Activated CD4-positive, alpha-beta T cell treated with anti-CD3 and anti-CD28 coated beads for 36 hours (primary cell): ENCODE measurements at regions of chr18 and their contacts with region 1.

Region 1: DNA sequence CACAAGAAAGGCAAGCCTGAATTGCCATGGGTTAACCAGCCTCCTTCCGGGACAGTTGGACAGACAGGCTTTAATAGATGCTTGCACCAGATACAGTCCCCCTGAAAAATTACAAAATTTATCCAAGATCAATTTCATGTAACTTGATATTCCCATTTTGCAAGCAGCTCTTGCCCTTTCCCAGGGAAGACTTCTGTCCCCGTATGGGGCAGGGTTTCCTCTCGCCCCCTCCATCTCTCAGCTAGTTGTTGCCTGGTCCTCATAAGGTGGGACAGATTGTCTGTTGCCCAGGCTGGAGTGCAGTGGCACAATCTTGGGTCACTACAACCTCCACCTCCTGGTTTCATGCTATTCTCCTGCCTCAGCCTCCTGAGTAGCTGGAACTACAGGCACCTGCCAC is 61.2 kb downstream of the TTC39C start:
- DNase-seq: no peak
- ATAC-seq: no peak
- H3K4me3 Mint-ChIP-seq: no peak overlapping the region
- H3K27ac Mint-ChIP-seq: peak overlapping the region; percentile 81
- H3K4me1 Mint-ChIP-seq: peaks cover 44% of the 10 kb centered on the region
- H3K27me3 Mint-ChIP-seq: no peaks in the 10 kb centered on the region

Region 2: DNA sequence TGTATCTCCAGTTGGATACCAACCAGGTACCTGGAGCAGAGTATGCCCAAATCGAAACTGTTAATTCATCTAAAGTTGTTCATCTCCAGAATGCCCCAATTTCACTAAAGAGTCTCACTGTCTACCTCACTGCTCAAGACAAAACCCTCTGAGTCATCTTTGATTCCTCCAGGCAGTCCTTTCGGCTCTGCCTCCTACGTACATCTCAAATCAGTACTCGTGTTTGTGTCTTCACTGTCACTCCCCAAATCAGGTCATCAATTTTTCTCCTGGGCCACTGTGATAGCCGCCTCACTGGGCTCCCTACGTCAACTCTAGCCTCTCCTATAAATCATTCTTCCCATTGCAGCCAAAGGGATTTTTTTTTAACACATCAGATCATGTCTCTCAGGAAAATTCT is 103.3 kb before region 1 on chr18:
- CTCF ChIA-PET with region 1: interaction called, 4 read pairs
- POLR2A ChIA-PET with region 1: no interaction called
- intact Hi-C with region 1: loop called in 1 of 2 experiments (anchors 1 kb)
- DNase-seq: peak; percentile 55
- ATAC-seq: peak; percentile 92
- H3K4me3 Mint-ChIP-seq: no peak overlapping the region
- H3K27ac Mint-ChIP-seq: no peak overlapping the region
- H3K4me1 Mint-ChIP-seq: peaks cover 52% of the 10 kb centered on the region
- H3K27me3 Mint-ChIP-seq: no peaks in the 10 kb centered on the region

Region 3: DNA sequence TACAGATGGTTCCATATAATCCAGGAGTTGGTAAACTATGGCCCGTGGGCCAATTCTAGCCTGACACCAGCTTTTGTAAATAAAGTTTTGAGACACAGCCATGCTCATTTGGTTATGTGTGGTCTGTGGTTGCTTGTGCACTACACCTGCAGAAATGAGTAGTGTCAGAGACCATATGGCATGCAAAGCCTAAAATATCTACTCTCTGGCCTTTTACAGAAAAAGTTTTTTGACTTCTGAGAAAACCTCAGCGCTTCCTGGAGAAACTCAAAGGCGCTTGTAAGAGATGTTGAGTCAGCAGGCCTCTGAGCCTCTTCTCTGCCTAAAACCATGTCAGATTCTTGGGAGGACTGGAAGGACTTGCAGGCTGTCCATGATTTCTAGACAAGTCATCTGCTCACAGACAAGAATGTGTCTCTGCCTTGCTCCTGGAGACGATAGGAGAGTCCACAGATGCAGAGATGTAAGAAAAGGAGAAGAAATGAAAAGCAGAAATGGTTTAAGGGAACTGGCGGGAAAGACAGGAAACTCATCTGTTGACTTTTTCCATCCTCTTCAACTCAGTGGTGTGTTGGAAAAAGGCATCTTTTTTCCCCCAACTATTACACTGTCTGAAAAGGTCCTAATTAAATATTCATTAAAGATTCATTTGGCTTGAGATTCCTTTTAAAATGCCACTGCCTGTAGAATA is 55.9 kb before region 1 on chr18:
- CTCF ChIA-PET with region 1: interaction called, 4 read pairs
- POLR2A ChIA-PET with region 1: no interaction called
- intact Hi-C with region 1: loop called (anchors 1 to 2 kb)
- DNase-seq: peak; percentile 76
- ATAC-seq: peak; percentile 70
- H3K4me3 Mint-ChIP-seq: peak overlapping the region; percentile 55
- H3K27ac Mint-ChIP-seq: peak overlapping the region; percentile 96
- H3K4me1 Mint-ChIP-seq: peaks cover 85% of the 10 kb centered on the region
- H3K27me3 Mint-ChIP-seq: no peaks in the 10 kb centered on the region

Region 4: GRCh38 chr18:24063121-24063731 is 12.5 kb before region 1 on chr18:
- CTCF ChIA-PET with region 1: interaction called, 5 read pairs
- POLR2A ChIA-PET with region 1: no interaction called
- intact Hi-C with region 1: loop called in 1 of 2 experiments (anchors 2 kb)
- DNase-seq: peak; percentile 21
- ATAC-seq: peak; percentile 96
- H3K4me3 Mint-ChIP-seq: no peak overlapping the region
- H3K27ac Mint-ChIP-seq: peak overlapping the region; percentile 3
- H3K4me1 Mint-ChIP-seq: peaks cover 63% of the 10 kb centered on the region
- H3K27me3 Mint-ChIP-seq: no peaks in the 10 kb centered on the region

Region 5: GRCh38 chr18:24128700-24129099 is 53.0 kb after region 1 on chr18:
- CTCF ChIA-PET with region 1: no interaction called
- POLR2A ChIA-PET with region 1: no interaction called
- intact Hi-C with region 1: no loop called
- DNase-seq: no peak
- ATAC-seq: no peak
- H3K4me3 Mint-ChIP-seq: no peak overlapping the region
- H3K27ac Mint-ChIP-seq: no peak overlapping the region
- H3K4me1 Mint-ChIP-seq: no peaks in the 10 kb centered on the region
- H3K27me3 Mint-ChIP-seq: no peaks in the 10 kb centered on the region